Activated naive CD4-positive, alpha-beta T cell treated with anti-CD3 and anti-CD28 coated beads, Interleukin-2, amount 10 ng/mL, durations not matched to agents 7 days and 5 days (primary cell): ENCODE measurements at regions of chr9 and their contacts with region 1.

Region 1: DNA sequence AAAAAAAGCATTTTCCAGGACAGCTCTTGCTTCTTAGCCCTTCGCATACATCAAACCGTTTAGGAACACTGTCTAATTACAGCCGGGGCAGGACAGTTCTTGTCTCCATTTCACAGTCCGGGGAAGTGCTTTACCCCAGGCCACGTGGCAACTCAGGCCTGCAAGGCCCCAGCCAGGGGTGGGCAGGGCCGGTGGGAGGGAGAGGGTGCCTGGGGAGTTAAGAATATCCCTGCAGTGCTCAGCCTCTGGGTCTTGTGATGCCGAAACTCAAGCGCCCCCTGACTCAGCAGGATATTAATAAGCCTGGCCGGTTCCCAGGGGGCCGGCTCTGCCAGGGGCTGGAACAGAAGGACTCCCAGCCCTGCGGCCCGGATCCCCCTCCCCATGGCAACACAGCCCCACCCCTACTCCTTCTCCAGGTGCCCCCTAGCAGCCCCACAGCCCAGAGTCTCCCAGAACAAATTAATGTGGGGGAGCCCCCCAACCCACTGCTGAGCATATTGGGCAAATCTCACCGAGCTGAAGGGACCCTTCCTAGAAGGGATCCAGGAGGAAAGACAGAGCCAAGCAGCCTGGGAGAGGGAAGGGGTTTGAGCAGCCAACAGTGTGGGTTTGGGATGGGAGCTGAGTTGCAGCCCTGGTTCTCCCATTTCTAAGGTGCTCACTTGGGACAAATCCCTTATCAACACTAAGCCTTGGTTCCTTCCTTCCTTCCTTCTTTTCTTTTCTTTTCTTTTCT is 45.3 kb downstream of the PLPP7 start:
- DNase-seq: no peak
- H3K4me3 Mint-ChIP-seq: no peak overlapping the region
- H3K27ac Mint-ChIP-seq: no peak overlapping the region
- H3K4me1 Mint-ChIP-seq: peaks cover 4% of the 10 kb centered on the region
- H3K27me3 Mint-ChIP-seq: peaks cover 43% of the 10 kb centered on the region

Region 2: GRCh38 chr9:131178382-131178781 is 156.4 kb before region 1 on chr9:
- CTCF ChIA-PET with region 1: interaction called, 161 read pairs
- DNase-seq: peak; percentile 87
- H3K4me3 Mint-ChIP-seq: no peak overlapping the region
- H3K27ac Mint-ChIP-seq: peak overlapping the region; percentile 72
- H3K4me1 Mint-ChIP-seq: peaks cover 9% of the 10 kb centered on the region
- H3K27me3 Mint-ChIP-seq: no peaks in the 10 kb centered on the region

Region 3: DNA sequence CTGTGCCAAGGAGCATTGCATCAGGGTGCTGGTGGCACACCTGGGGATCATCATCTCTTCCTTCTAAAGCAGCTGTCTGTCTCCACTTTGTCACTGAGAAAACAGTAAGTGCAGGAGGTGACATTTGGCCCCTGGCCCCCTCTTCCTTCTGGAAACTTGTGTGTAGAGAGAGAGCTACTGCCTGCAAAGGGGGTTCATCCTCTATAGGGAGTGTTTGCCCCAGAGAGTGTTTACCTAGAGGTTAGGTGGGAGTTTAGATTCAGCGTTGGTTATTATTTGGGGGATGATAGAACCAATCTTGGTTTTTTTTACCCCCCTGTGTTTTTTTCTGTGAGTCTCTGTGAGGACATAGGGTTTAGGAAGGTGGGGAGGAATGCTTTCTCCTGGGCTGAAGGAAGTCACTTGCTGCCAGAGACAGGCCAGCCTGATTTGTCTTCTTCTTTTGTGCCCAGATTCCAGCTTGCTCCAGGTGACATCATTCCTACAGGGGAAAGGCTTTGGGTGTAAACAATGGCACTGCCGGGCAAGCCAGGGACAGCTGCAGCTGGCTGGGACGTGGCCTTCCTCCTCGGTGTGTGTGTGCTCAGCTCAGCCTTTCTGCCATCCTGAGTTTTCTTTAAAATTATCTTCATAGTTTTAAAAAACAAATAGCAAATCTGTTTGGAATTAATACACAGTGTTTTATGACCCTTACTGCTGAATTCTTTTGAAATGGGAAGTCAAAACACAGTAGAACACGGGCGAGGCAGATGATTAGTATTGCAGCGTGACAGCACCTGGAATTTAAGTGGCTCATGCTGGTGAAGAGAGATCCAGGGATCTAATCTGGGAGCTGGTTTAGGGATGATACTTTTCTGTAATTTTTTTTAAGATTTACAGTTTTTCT is 83.6 kb after region 1 on chr9:
- CTCF ChIA-PET with region 1: no interaction called
- DNase-seq: no peak
- H3K4me3 Mint-ChIP-seq: peak overlapping the region; percentile 22
- H3K27ac Mint-ChIP-seq: peak overlapping the region; percentile 73
- H3K4me1 Mint-ChIP-seq: peaks cover 91% of the 10 kb centered on the region
- H3K27me3 Mint-ChIP-seq: no peaks in the 10 kb centered on the region